ENCODE measurements at regions of chr4 and their contacts with region 1.

Region 1: DNA sequence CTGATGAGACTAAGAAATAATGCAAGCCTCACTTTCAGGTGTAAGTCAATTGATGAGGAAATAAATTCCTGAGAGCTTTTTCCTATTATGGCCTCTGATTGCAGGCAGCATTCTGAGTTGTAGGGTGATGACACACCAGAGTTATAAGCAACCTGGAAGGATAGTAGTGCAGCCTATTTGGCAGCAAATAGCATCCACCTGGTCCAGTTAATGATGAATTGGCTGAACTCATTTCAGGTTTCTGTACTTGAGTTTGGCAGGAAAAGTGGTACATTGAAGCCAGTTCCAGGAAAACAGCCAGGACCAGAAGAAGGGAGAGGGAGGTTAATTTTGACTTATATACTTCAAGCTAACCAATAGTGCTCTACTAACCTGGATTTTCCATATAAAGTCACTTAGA is 316.8 kb downstream of the NAF1 start:
- DNase-seq: no peak
- ATAC-seq: no peak
- H3K4me3 Mint-ChIP-seq: no peak overlapping the region
- H3K27ac Mint-ChIP-seq: no peak overlapping the region
- H3K4me1 Mint-ChIP-seq: peaks cover 6% of the 10 kb centered on the region
- H3K27me3 Mint-ChIP-seq: no peaks in the 10 kb centered on the region
- CTCF ChIP-seq: no peak

Region 2: DNA sequence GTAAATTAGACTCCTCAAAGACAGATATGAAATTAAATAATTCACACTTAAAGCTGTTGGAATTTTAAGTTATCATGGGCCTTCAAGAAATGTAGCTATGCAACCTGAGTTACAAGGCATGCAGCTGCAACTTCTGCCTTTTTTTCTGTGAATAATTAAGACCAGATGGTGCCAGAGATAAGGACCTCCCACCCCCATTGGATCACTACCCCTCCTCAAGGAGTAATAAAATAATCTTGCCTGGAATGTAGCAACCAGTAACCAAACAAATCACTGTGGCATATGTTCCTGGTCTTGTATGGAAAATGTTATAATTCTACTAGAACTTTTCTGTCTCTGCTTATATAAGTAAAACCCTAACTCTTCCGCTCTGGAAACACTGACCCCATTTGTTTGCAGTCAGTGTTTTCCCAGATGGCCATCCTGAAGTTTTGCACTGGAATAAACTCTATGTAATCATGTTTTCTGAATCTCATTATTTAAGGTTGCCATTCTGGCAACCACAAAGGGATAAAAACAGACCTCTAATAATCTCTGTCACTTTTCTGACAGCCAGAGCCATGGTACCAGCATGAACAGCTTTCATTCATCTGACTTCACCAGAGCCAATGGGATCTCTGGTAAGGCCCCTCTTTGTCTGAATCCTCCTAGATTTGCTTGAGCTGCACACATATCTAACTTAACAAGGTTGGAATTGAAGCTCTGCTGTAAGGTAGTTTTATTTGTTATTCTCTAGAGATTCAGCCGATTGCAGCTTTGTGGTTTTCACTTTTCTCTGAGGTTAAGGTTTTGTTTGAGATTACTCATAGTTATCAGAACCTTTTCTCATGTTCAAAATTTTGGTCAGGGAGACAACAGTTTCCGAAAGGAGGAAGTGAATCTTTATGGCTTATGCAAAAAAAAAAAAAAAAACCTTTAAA is 42.1 kb after region 1 on chr4:
- CTCF ChIA-PET with region 1: no interaction called
- POLR2A ChIA-PET with region 1: no interaction called
- intact Hi-C with region 1: loop called (anchors 2 kb)
- DNase-seq: no peak
- ATAC-seq: peak; percentile 79
- H3K4me3 Mint-ChIP-seq: peak overlapping the region; percentile 52
- H3K27ac Mint-ChIP-seq: no peak overlapping the region
- H3K4me1 Mint-ChIP-seq: peaks cover 14% of the 10 kb centered on the region
- H3K27me3 Mint-ChIP-seq: peaks cover 5% of the 10 kb centered on the region
- CTCF ChIP-seq: no peak

Measured in activated B cell treated with CpG ODN at 0.5 μM for 24 hours (primary cell).